Naive thymus-derived CD4-positive, alpha-beta T cell (primary cell): ENCODE measurements at regions of chr7 and their contacts with region 1.

Region 1: GRCh38 chr7:120805636-120806388 is 52.1 kb downstream of the TSPAN12 start:
- DNase-seq: peak; percentile 6 to 57 (median 38)
- ATAC-seq: peak; percentile 62
- H3K4me3 ChIP-seq: no peak overlapping the region
- H3K4me3 Mint-ChIP-seq: no peak overlapping the region
- H3K27ac ChIP-seq: no peak overlapping the region
- H3K27ac Mint-ChIP-seq: no peak overlapping the region
- H3K4me1 ChIP-seq: no peaks in the 10 kb centered on the region
- H3K4me1 Mint-ChIP-seq: no peaks in the 10 kb centered on the region
- H3K27me3 ChIP-seq: no peaks in the 10 kb centered on the region
- H3K27me3 Mint-ChIP-seq: peaks cover 0 to 10% (median 6%) of the 10 kb centered on the region in 5 donors

Region 2: GRCh38 chr7:120460949-120461348 is 344.9 kb before region 1 on chr7:
- CTCF ChIA-PET with region 1: no interaction called
- POLR2A ChIA-PET with region 1: no interaction called
- intact Hi-C with region 1: no loop called
- DNase-seq: no peak
- ATAC-seq: no peak
- H3K4me3 ChIP-seq: no peak overlapping the region
- H3K4me3 Mint-ChIP-seq: no peak overlapping the region
- H3K27ac ChIP-seq: no peak overlapping the region
- H3K27ac Mint-ChIP-seq: no peak overlapping the region
- H3K4me1 ChIP-seq: no peaks in the 10 kb centered on the region
- H3K4me1 Mint-ChIP-seq: no peaks in the 10 kb centered on the region
- H3K27me3 ChIP-seq: no peaks in the 10 kb centered on the region
- H3K27me3 Mint-ChIP-seq: no peaks in the 10 kb centered on the region

Region 3: DNA sequence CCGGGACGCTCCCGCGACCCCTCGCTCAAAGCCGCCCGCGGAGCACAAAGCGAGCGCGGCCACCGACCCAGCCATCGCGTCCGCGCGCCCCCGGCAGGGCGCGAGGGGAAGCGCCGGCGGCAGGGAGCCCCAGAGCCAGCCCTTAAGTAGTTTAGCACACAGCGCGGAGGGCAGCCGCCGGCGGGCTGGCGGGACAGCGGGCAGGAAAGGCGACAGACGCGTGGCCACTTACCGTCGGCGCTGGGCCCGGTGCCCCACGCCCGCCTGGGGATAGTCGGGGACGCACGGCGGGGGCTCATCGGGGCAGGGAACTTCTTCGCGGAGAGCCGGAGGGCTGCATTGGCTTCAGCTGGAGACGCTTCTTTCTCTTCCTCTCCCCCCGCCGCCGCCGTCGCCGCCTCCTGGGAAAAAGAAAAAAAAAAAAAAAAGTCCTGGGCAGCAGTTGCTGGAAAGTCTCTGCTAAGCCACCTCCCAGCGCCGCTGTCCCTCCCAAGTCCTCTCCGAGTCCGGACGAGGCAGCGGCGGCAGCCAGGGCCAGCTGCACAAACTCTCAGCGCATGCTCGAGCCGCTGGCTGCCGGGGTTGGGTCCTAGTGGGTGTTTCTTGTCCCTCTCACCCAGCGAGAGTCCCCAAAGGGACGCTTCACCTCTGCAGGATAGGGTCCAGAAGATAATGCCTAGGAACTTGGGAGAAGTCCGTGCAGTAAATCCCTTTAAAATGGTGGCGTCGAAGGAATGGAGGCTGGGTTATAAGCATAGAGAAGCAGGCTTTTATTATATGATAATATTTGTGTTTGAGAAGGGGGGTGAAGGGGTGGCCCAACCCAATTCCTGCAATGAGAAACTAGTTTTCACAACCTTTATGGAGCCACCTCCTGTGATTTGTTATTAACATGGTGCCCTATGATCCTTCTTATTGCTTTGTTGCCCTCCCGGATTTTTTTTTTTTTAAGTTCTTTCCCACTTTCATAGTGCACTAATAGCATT is 52.1 kb after region 1 on chr7 and contains the start of gene TSPAN12:
- CTCF ChIA-PET with region 1: no interaction called
- POLR2A ChIA-PET with region 1: no interaction called
- intact Hi-C with region 1: loop called in 1 of 2 experiments (anchors 5 kb)
- DNase-seq: peak in 7 of 9 donors; percentile 11 to 64 (median 28)
- ATAC-seq: peak; percentile 89
- H3K4me3 ChIP-seq: peak within 1 kb of the TSS; percentile 52
- H3K4me3 Mint-ChIP-seq: peak within 1 kb of the TSS; percentile 82 to 90 (median 86)
- H3K27ac ChIP-seq: no peak within 1 kb of the TSS
- H3K27ac Mint-ChIP-seq: no peak within 1 kb of the TSS
- H3K4me1 ChIP-seq: peaks cover 0 to 8% of the 10 kb centered on the region in 2 donors
- H3K4me1 Mint-ChIP-seq: peaks cover 10 to 13% (median 12%) of the 10 kb centered on the region in 7 donors
- H3K27me3 ChIP-seq: peaks cover 13 to 15% of the 10 kb centered on the region in 2 donors
- H3K27me3 Mint-ChIP-seq: peaks cover 51 to 71% (median 66%) of the 10 kb centered on the region in 5 donors
- total RNA-seq, gene TSPAN12: not detected

Region 4: GRCh38 chr7:120941064-120941463 is 135.3 kb after region 1 on chr7:
- CTCF ChIA-PET with region 1: no interaction called
- POLR2A ChIA-PET with region 1: no interaction called
- intact Hi-C with region 1: loop called (anchors 1 kb)
- DNase-seq: no peak
- ATAC-seq: peak; percentile 47
- H3K4me3 ChIP-seq: no peak overlapping the region
- H3K4me3 Mint-ChIP-seq: no peak overlapping the region
- H3K27ac ChIP-seq: no peak overlapping the region
- H3K27ac Mint-ChIP-seq: no peak overlapping the region
- H3K4me1 ChIP-seq: no peaks in the 10 kb centered on the region
- H3K4me1 Mint-ChIP-seq: no peaks in the 10 kb centered on the region
- H3K27me3 ChIP-seq: no peaks in the 10 kb centered on the region
- H3K27me3 Mint-ChIP-seq: peaks cover under 1 to 28% (median 9%) of the 10 kb centered on the region in 5 donors

Region 5: GRCh38 chr7:121081327-121081936 is 275.6 kb after region 1 on chr7:
- CTCF ChIA-PET with region 1: interaction called, 15 read pairs
- POLR2A ChIA-PET with region 1: no interaction called
- intact Hi-C with region 1: loop called (anchors 1 kb)
- DNase-seq: peak in 7 of 9 donors; percentile 19 to 63 (median 47)
- ATAC-seq: peak; percentile 88
- H3K4me3 ChIP-seq: no peak overlapping the region
- H3K4me3 Mint-ChIP-seq: no peak overlapping the region
- H3K27ac ChIP-seq: no peak overlapping the region
- H3K27ac Mint-ChIP-seq: no peak overlapping the region
- H3K4me1 ChIP-seq: no peaks in the 10 kb centered on the region
- H3K4me1 Mint-ChIP-seq: no peaks in the 10 kb centered on the region
- H3K27me3 ChIP-seq: no peaks in the 10 kb centered on the region
- H3K27me3 Mint-ChIP-seq: peaks cover 5 to 26% (median 12%) of the 10 kb centered on the region in 5 donors

Region 6: GRCh38 chr7:121107923-121108498 is 302.2 kb after region 1 on chr7:
- CTCF ChIA-PET with region 1: interaction called, 6 read pairs
- POLR2A ChIA-PET with region 1: no interaction called
- intact Hi-C with region 1: loop called (anchors 1 to 2 kb)
- DNase-seq: peak in 7 of 9 donors; percentile 26 to 59 (median 54)
- ATAC-seq: peak; percentile 83
- H3K4me3 ChIP-seq: no peak overlapping the region
- H3K4me3 Mint-ChIP-seq: no peak overlapping the region
- H3K27ac ChIP-seq: no peak overlapping the region
- H3K27ac Mint-ChIP-seq: no peak overlapping the region
- H3K4me1 ChIP-seq: no peaks in the 10 kb centered on the region
- H3K4me1 Mint-ChIP-seq: no peaks in the 10 kb centered on the region
- H3K27me3 ChIP-seq: no peaks in the 10 kb centered on the region
- H3K27me3 Mint-ChIP-seq: peaks cover 0 to 27% (median 5%) of the 10 kb centered on the region in 5 donors

Region 7: GRCh38 chr7:121235201-121235600 is 429.4 kb after region 1 on chr7:
- CTCF ChIA-PET with region 1: no interaction called
- POLR2A ChIA-PET with region 1: no interaction called
- intact Hi-C with region 1: no loop called
- DNase-seq: no peak
- ATAC-seq: no peak
- H3K4me3 ChIP-seq: no peak overlapping the region
- H3K4me3 Mint-ChIP-seq: no peak overlapping the region
- H3K27ac ChIP-seq: no peak overlapping the region
- H3K27ac Mint-ChIP-seq: no peak overlapping the region
- H3K4me1 ChIP-seq: no peaks in the 10 kb centered on the region
- H3K4me1 Mint-ChIP-seq: no peaks in the 10 kb centered on the region
- H3K27me3 ChIP-seq: no peaks in the 10 kb centered on the region
- H3K27me3 Mint-ChIP-seq: peaks cover 0 to 15% (median 9%) of the 10 kb centered on the region in 5 donors

Region 8: GRCh38 chr7:121994625-121995410 is 1189.0 kb after region 1 on chr7:
- CTCF ChIA-PET with region 1: no interaction called
- POLR2A ChIA-PET with region 1: no interaction called
- intact Hi-C with region 1: loop called in 1 of 2 experiments (anchors 10 kb)
- DNase-seq: peak in 2 of 9 donors; percentile 5 to 36
- ATAC-seq: peak; percentile 68
- H3K4me3 ChIP-seq: no peak overlapping the region
- H3K4me3 Mint-ChIP-seq: no peak overlapping the region
- H3K27ac ChIP-seq: no peak overlapping the region
- H3K27ac Mint-ChIP-seq: no peak overlapping the region
- H3K4me1 ChIP-seq: no peaks in the 10 kb centered on the region
- H3K4me1 Mint-ChIP-seq: peaks cover 0 to 2% (median 0%) of the 10 kb centered on the region in 7 donors
- H3K27me3 ChIP-seq: no peaks in the 10 kb centered on the region
- H3K27me3 Mint-ChIP-seq: peaks cover 0 to 4% (median 0%) of the 10 kb centered on the region in 5 donors